HEK293 (cell line): ENCODE measurements at regions of chr2 and their contacts with region 1.

Region 1: GRCh38 chr2:121297217-121297830 is 12.3 kb upstream of the TFCP2L1 start:
- H3K4me3 ChIP-seq: no peak overlapping the region
- H3K27ac ChIP-seq: no peak overlapping the region
- H3K4me1 ChIP-seq: no peaks in the 10 kb centered on the region
- CTCF ChIP-seq: peak; percentile 62

Region 2: GRCh38 chr2:121095257-121096080 is 201.9 kb before region 1 on chr2:
- CTCF ChIA-PET with region 1: interaction called, 10 read pairs
- POLR2A ChIA-PET with region 1: no interaction called
- H3K4me3 ChIP-seq: no peak overlapping the region
- H3K27ac ChIP-seq: no peak overlapping the region
- H3K4me1 ChIP-seq: no peaks in the 10 kb centered on the region
- CTCF ChIP-seq: peak; percentile 86